Activated CD4-positive, alpha-beta memory T cell treated with anti-CD3 and anti-CD28 coated beads, Interleukin-2, amount 10 ng/mL, durations not matched to agents 7 days and 5 days (primary cell): ENCODE measurements at regions of chr4 and their contacts with region 1.

Region 1: DNA sequence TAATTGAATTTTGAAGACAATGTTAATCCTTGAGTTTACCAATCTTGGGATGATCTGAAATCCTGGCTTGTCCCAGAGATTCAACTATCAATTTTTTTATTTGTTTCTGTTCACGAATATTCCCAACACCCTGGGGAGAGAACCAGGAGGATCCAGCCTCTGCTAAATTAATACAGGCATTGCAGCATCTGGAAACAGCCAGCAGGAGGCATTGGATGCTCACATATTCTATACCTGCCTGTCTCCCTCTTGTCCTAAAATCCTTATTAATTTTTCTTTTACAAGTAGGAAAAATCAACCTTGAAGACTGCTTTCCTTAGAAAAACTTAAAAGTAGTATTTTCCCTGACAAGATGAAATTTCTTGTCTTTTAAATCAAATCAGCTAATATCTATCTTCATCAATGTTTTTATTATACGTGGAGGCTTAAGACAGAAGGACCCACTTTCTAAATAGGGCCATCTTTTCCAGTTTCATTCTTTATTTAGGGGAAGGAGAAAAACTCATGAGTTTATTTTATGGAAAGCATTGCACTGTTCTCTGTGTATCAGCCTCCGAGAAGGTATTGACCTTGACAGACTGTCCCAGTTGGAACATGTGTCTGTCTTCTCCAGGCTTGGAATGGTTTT is 102.4 kb downstream of the CLNK start:
- DNase-seq: no peak
- H3K4me3 Mint-ChIP-seq: no peak overlapping the region
- H3K27ac Mint-ChIP-seq: no peak overlapping the region
- H3K4me1 Mint-ChIP-seq: peaks cover 4% of the 10 kb centered on the region
- H3K27me3 Mint-ChIP-seq: no peaks in the 10 kb centered on the region

Region 2: DNA sequence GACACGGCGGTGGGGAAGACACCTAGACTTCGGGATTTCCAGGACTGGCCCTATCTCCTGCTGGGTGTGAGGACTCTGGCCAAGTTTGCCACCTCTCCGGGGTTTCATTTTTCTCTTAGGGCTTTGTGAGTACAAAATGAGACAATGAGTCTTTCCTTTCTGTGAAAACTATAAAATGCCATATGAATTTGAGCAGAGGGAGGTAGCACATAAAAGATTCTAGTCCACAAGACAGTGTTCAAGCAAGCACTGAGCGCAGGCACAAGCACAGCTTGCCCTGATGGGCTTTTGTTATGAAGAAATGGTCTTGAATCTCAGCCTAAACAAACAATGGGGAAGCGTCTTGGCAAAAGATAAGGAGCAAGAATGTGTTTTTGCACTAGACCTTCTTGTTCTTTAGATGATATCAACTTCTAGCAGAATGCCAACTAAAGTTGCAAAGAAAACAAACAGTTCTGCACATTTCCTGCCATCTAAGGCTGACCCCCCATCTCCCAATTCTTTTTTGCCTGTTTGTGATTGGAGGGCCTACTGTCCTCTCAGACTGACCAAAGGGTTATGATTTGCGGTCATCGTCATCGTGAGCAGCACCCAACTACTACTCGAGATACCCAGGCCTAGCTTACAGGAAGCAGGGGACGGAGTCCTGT is 51.9 kb before region 1 on chr4:
- CTCF ChIA-PET with region 1: no interaction called
- POLR2A ChIA-PET with region 1: no interaction called
- DNase-seq: no peak
- H3K4me3 Mint-ChIP-seq: no peak overlapping the region
- H3K27ac Mint-ChIP-seq: no peak overlapping the region
- H3K4me1 Mint-ChIP-seq: no peaks in the 10 kb centered on the region
- H3K27me3 Mint-ChIP-seq: peaks cover 7% of the 10 kb centered on the region

Region 3: GRCh38 chr4:11424000-11424399 is 841.8 kb after region 1 on chr4:
- CTCF ChIA-PET with region 1: interaction called, 13 read pairs
- POLR2A ChIA-PET with region 1: no interaction called
- DNase-seq: no peak
- H3K4me3 Mint-ChIP-seq: no peak overlapping the region
- H3K27ac Mint-ChIP-seq: no peak overlapping the region
- H3K4me1 Mint-ChIP-seq: peaks cover 9% of the 10 kb centered on the region
- H3K27me3 Mint-ChIP-seq: peaks cover 24% of the 10 kb centered on the region